MCF 10A (cell line): ENCODE measurements at regions of chr5 and their contacts with region 1.

Region 1: DNA sequence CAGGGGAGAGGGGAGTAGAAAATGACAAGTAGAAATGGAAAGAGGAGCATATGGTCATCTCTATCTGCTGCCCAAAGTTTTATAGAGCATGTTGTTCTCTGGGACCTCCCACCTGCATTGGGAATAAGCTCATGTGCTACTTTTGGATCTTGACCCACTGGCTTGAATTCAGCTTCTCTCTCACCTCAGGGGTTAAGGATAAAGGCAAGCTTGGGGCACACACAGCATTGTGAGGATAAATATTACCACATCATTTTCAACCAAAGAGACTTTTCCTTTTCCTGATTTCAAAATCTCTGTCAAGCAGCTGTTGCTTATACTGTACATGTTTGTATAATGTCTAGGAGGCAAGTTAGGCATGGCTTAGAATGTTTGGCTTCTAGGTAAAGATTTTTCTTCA is 16.6 kb downstream of the ATP10B start:
- DNase-seq: peak; percentile 19
- H3K4me3 Mint-ChIP-seq: no peak overlapping the region
- H3K27ac Mint-ChIP-seq: no peak overlapping the region
- H3K4me1 Mint-ChIP-seq: peaks cover 41% of the 10 kb centered on the region
- H3K27me3 Mint-ChIP-seq: no peaks in the 10 kb centered on the region
- CTCF ChIP-seq: no peak

Region 2: GRCh38 chr5:160852049-160852448 is 16.7 kb after region 1 on chr5 and contains the start of gene ATP10B:
- CTCF ChIA-PET with region 1: no interaction called
- POLR2A ChIA-PET with region 1: interaction called, 12 read pairs
- intact Hi-C with region 1: no loop called
- DNase-seq: no peak
- H3K4me3 Mint-ChIP-seq: no peak within 1 kb of the TSS
- H3K27ac Mint-ChIP-seq: no peak within 1 kb of the TSS
- H3K4me1 Mint-ChIP-seq: no peaks in the 10 kb centered on the region
- H3K27me3 Mint-ChIP-seq: no peaks in the 10 kb centered on the region
- CTCF ChIP-seq: no peak
- total RNA-seq, gene ATP10B: not detected in 2 replicates

Region 3: GRCh38 chr5:160938532-160938931 is 103.2 kb after region 1 on chr5:
- CTCF ChIA-PET with region 1: no interaction called
- POLR2A ChIA-PET with region 1: interaction called, 12 read pairs
- intact Hi-C with region 1: loop called (anchors 5 kb)
- DNase-seq: peak; percentile 99
- H3K4me3 Mint-ChIP-seq: no peak overlapping the region
- H3K27ac Mint-ChIP-seq: peak overlapping the region; percentile 88
- H3K4me1 Mint-ChIP-seq: peaks cover 13% of the 10 kb centered on the region
- H3K27me3 Mint-ChIP-seq: no peaks in the 10 kb centered on the region
- CTCF ChIP-seq: no peak

Region 4: DNA sequence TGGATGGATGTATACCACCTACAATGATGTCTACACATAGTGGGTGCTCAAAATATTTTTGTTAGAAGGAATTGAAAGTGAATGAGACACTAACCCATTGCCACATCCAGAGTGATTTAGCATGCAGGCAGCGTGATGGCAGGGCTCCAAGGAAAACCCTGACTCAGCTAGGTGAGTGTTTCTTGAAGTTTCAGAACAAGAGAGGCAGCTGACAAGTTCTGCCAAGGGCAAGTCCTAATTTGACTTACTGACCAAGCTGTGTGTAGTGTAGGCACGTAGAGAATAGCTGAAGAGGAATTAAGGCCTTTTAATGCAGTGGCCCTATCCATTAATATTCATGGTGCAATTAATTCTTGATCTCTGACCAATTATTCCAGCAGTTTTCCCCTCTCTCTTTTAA is 124.4 kb after region 1 on chr5:
- CTCF ChIA-PET with region 1: no interaction called
- POLR2A ChIA-PET with region 1: interaction called, 27 read pairs
- intact Hi-C with region 1: loop called (anchors 5 kb)
- DNase-seq: peak; percentile 99
- H3K4me3 Mint-ChIP-seq: no peak overlapping the region
- H3K27ac Mint-ChIP-seq: peak overlapping the region; percentile 69
- H3K4me1 Mint-ChIP-seq: peaks cover 37% of the 10 kb centered on the region
- H3K27me3 Mint-ChIP-seq: no peaks in the 10 kb centered on the region
- CTCF ChIP-seq: no peak